Activated CD8-positive, alpha-beta memory T cell treated with anti-CD3 and anti-CD28 coated beads, Interleukin-2, amount 10 ng/mL, durations not matched to agents 7 days and 5 days (primary cell): ENCODE measurements at regions of chr17 and their contacts with region 1.

Region 1: GRCh38 chr17:76278952-76279741 is 14.0 kb downstream of the UBALD2 start:
- DNase-seq: peak; percentile 89
- ATAC-seq: peak; percentile 88
- H3K4me3 Mint-ChIP-seq: no peak overlapping the region
- H3K27ac Mint-ChIP-seq: no peak overlapping the region
- H3K4me1 Mint-ChIP-seq: peaks cover 4% of the 10 kb centered on the region
- H3K27me3 Mint-ChIP-seq: no peaks in the 10 kb centered on the region

Region 2: DNA sequence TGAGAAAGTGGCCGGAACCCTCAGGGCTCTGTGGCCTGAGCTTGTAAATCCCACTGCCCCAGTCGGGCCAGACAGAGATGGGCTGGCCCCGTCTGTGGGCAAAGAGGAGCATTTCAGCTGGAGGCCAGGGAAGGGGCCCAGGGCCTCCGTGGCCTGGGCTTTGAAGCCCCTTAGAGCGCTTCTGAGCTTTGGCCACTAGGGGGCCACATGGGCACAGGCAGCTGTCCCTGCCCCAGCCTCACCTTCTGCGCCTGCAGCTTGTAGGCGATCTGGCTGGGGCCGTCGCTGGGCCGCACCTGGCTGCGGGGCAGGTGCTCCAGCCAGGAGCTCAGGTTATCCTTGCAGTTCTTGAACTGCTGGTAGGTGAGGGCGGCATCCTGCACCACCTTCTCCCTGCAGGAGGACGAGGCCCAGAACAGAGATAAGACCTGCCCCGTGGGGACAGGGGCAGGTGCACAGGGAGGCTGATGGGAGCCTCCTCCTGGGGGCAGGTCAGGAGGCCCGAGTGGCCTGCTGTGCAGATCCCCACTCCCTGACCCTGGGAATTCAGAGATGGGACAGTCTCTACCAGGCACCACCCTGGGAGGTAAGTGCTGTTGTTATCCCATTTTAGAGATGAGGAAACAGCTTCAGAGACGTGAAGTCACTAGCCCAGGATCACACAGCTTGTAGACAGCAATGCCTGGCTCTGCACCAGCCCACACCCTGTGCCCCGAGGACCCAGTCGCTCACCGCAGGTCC is 264.8 kb before region 1 on chr17:
- CTCF ChIA-PET with region 1: interaction called, 39 read pairs
- DNase-seq: peak; percentile 85
- ATAC-seq: peak; percentile 98
- H3K4me3 Mint-ChIP-seq: no peak overlapping the region
- H3K27ac Mint-ChIP-seq: no peak overlapping the region
- H3K4me1 Mint-ChIP-seq: peaks cover 4% of the 10 kb centered on the region
- H3K27me3 Mint-ChIP-seq: no peaks in the 10 kb centered on the region

Region 3: DNA sequence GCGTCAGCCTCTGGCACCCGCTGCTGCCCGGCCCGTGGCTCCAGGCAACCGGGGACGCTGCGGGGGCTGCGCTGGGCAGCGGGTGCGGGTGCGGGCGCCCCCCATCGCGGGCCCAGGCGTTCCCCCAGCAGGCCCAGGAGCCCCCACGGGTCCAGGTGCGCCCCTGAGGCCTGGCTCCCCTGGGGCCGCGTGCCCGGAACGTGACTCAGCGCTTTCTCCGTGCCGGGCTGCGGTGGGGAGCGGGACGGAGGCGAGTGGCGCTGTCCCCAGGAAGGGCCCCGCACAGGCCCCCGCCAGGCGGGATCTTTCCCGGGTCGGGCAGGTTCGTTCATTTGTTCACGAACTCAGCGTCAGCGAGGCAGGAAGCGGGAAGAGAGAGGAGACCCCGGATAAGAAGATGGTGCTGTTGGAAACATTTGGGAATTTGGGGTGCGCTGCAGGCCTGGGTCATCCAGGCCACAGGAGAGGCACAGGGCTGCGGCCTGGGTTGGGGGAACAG is 157.2 kb before region 1 on chr17:
- CTCF ChIA-PET with region 1: interaction called, 308 read pairs
- DNase-seq: no peak
- ATAC-seq: peak; percentile 8
- H3K4me3 Mint-ChIP-seq: no peak overlapping the region
- H3K27ac Mint-ChIP-seq: peak overlapping the region; percentile 77
- H3K4me1 Mint-ChIP-seq: peaks cover 14% of the 10 kb centered on the region
- H3K27me3 Mint-ChIP-seq: no peaks in the 10 kb centered on the region

Region 4: DNA sequence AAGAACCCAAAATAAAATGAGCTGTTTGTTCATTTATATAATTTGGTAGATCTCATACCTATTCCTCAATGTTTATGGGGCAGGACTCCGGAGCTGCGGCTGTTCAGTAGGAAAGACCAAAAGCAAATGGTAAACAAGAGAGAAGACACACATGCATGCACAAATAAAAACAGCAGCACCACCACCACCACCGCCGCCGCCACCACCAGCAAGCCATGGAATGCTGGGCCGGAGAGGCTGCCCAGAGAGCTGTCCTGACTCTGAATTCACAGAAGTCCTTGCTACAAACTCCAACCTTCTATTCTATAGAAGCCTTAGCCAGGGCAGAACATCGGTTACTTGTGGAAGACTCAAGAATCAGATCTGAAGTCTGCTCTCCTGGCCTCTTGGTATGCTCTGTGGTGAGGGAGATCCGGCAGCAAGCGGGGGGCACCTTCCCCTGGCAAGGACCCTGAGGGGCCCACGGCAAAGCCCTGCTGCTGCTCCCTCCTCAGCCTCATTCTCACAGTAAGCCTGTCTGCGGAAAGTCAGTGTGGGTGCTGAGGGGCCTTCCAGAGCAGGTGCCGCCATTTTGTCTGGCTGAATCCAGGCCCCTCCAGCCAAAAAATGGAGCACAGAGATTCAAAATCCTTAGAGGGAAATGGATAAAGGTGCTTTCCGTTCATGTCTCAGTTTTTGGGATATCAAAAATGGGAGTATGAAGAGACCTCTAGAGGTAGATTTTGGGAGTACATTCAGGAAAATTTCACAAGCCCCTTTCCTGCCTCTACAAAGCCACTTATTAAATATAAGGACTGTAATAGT is 131.7 kb before region 1 on chr17:
- CTCF ChIA-PET with region 1: interaction called, 18 read pairs
- DNase-seq: no peak
- ATAC-seq: no peak
- H3K4me3 Mint-ChIP-seq: no peak overlapping the region
- H3K27ac Mint-ChIP-seq: peak overlapping the region; percentile 92
- H3K4me1 Mint-ChIP-seq: peaks cover 61% of the 10 kb centered on the region
- H3K27me3 Mint-ChIP-seq: no peaks in the 10 kb centered on the region

Region 5: GRCh38 chr17:76182016-76182764 is 97.0 kb before region 1 on chr17:
- CTCF ChIA-PET with region 1: interaction called, 98 read pairs
- DNase-seq: peak; percentile 98
- ATAC-seq: peak; percentile 87
- H3K4me3 Mint-ChIP-seq: no peak overlapping the region
- H3K27ac Mint-ChIP-seq: peak overlapping the region; percentile 94
- H3K4me1 Mint-ChIP-seq: peaks cover 59% of the 10 kb centered on the region
- H3K27me3 Mint-ChIP-seq: no peaks in the 10 kb centered on the region

Region 6: DNA sequence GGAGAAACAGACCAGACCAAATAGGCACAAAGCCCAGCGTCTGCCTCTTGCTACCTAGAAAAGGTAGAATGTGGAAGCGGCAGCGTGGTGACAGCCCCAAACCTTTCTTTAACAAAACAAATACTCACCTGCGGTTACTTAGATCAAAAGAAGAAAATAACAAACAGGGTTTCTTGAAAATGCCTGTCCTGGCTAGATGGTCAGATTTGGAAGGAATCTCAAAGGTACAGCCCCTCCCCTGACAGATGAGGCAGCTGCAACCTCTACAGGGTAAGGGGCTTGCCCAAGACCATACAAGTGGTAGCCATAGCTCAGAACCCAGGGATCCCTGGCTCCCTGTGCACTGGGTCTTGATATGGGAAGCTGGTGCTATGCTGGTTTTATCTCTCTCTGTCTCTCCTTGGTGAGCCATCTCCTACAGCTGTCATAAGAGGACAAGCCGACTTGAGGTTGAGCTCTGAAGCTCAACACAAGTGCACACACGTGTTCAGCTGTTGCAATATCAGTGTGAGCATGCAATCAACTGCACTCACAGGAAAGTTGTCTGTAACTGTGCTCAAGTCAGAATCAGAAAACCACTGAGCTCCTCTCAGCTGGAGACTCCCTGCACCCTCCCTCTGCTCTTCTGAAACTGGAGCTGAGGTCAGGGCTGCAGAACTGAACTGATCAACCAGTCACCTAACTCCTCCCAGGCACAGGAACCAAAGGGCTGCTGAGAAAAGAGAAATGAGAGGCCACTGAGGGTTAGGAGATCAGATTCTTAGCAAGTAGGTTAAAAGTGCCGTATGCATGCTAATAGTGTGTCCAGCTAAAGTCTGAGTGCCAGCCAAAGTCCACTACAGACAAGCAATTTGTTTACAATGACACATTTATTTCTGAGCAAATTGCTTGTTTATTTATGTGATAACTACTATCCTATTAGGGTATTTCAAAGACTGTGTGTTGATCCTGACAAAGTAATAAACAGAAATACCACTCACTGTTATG is 32.8 kb before region 1 on chr17:
- CTCF ChIA-PET with region 1: interaction called, 17 read pairs
- DNase-seq: peak; percentile 94
- ATAC-seq: peak; percentile 98
- H3K4me3 Mint-ChIP-seq: peak overlapping the region; percentile 50
- H3K27ac Mint-ChIP-seq: peak overlapping the region; percentile 90
- H3K4me1 Mint-ChIP-seq: peaks cover 73% of the 10 kb centered on the region
- H3K27me3 Mint-ChIP-seq: no peaks in the 10 kb centered on the region

Region 7: DNA sequence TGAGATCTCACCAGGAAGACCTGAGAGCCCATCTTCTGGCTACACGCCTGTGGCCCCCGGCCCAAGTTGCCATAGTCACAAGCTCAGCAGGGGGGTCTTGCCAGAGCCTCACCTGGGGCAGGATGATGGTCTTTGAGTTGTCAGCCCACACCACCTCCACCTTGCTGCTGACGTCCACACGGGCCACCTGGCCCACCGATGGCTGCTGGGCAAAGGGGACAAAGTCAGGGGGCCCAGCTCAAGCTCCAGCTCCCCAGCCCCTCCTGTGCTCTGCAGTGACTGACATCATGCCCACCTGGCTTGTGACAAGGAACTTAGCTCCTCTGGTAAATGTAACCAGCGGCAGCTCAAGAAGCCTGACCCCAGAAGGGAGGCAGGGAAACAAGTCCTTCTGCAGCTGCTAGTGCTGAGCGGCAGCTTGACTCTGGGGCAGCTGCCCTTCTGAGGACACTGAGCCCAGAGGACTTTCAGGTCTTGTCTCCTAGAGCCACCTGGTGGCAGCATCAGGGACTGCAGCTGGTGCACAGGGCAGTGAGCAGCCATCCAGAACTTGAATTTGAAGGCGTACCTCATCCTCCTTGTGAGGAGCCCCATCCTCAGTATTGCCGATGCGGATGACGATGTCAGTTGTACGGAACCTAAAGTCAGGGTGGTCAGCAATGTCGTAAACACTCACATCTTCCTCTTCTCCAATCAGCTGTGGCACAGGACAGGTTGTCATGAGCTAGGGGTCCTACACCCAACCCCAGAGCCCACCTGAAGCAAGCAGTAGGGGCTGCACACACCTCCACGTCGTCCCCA is 118.7 kb after region 1 on chr17:
- CTCF ChIA-PET with region 1: interaction called, 12 read pairs
- DNase-seq: peak; percentile 91
- ATAC-seq: peak; percentile 90
- H3K4me3 Mint-ChIP-seq: no peak overlapping the region
- H3K27ac Mint-ChIP-seq: no peak overlapping the region
- H3K4me1 Mint-ChIP-seq: no peaks in the 10 kb centered on the region
- H3K27me3 Mint-ChIP-seq: no peaks in the 10 kb centered on the region

Region 8: GRCh38 chr17:76737082-76737675 is 458.0 kb after region 1 on chr17 and contains the start of gene SRSF2:
- CTCF ChIA-PET with region 1: no interaction called
- DNase-seq: peak; percentile 99
- ATAC-seq: peak; percentile 74
- H3K4me3 Mint-ChIP-seq: peak within 1 kb of the TSS; percentile 92
- H3K27ac Mint-ChIP-seq: peak within 1 kb of the TSS; percentile 100
- H3K4me1 Mint-ChIP-seq: peaks cover 42% of the 10 kb centered on the region
- H3K27me3 Mint-ChIP-seq: no peaks in the 10 kb centered on the region
- total RNA-seq, gene SRSF2: 443 to 471 TPM